H1 (cell line): ENCODE measurements at regions of chr5 and their contacts with region 1.

Region 1: GRCh38 chr5:157994906-157995519 is 136.1 kb upstream of the CLINT1 start:
- DNase-seq: peak; percentile 73 to 85
- H3K4me3 ChIP-seq: no peak overlapping the region
- H3K27ac ChIP-seq: no peak overlapping the region
- H3K4me1 ChIP-seq: peaks cover 0 to 2% (median 0%) of the 10 kb centered on the region in 4 experiments; a peak in 1 of 7 replicates
- H3K27me3 ChIP-seq: no peaks in the 10 kb centered on the region
- CTCF ChIP-seq: peak; percentile 83 to 91 (median 91)
- EP300 ChIP-seq: no peak
- POLR2A ChIP-seq: no peak
- RAD21 ChIP-seq: peak; percentile 95 to 97

Region 2: GRCh38 chr5:157820593-157821252 is 174.3 kb before region 1 on chr5:
- CTCF ChIA-PET with region 1: interaction called, 18 read pairs
- POLR2A ChIA-PET with region 1: no interaction called
- DNase-seq: no peak
- H3K4me3 ChIP-seq: no peak overlapping the region
- H3K27ac ChIP-seq: no peak overlapping the region
- H3K4me1 ChIP-seq: peaks cover 0 to 2% (median 0%) of the 10 kb centered on the region in 4 experiments; a peak in 2 of 7 replicates
- H3K27me3 ChIP-seq: no peaks in the 10 kb centered on the region
- CTCF ChIP-seq: peak in 2 of 3 experiments; percentile 7 to 35; a peak in 2 of 4 replicates
- EP300 ChIP-seq: no peak
- POLR2A ChIP-seq: no peak
- RAD21 ChIP-seq: peak; percentile 26 to 31; a peak in 3 of 4 replicates

Region 3: DNA sequence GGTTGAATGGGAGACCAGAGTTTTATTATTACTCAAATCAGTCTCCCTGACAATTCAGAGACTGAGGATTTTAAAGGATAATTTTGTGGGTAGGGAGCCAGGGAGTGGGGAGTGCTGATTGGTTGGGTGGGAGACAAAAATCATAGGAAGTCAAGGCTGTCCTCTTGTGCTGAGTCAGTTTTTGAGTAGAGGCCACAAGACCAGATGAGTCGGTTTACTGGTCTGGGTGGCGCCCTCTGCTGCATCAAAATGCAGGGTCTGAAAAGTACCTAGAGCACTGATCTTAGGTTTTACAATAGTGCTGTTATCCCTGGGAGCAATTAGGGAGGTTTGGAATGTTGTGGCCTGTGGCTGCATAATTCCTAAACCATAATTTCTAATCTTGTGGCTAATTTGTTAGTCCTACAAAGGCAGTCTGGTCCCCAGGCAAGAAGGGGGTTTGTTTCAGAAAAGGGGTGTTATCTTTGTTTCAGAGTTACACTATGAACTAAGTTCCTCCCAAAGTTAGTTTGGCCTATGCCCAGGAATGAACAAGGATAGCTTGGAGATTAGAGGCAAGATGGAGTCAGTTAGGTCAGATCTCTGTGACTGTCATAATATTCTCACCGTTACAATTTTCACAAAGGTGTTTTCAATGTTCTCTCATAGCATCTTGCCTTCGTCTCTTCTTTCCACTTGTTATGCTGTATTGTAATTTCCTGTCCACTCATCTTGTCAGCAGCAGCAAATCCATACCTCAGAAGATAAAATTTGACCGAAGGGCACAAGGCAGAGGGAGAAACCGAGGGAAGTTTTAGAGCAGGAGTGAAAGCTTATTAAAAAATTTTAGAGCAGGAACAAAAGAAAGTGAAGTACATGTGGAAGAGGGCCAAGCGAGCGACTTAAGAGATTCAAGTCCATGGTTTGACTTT is 76.9 kb before region 1 on chr5:
- CTCF ChIA-PET with region 1: interaction called, 19 read pairs
- POLR2A ChIA-PET with region 1: interaction called, 3 read pairs
- DNase-seq: peak; percentile 50 to 75
- H3K4me3 ChIP-seq: no peak overlapping the region
- H3K27ac ChIP-seq: no peak overlapping the region
- H3K4me1 ChIP-seq: peaks cover 0 to 10% (median 6%) of the 10 kb centered on the region in 4 experiments; a peak in 6 of 7 replicates
- H3K27me3 ChIP-seq: no peaks in the 10 kb centered on the region
- CTCF ChIP-seq: peak; percentile 57 to 83 (median 74)
- EP300 ChIP-seq: no peak
- POLR2A ChIP-seq: no peak
- RAD21 ChIP-seq: peak; percentile 73 to 80

Region 4: DNA sequence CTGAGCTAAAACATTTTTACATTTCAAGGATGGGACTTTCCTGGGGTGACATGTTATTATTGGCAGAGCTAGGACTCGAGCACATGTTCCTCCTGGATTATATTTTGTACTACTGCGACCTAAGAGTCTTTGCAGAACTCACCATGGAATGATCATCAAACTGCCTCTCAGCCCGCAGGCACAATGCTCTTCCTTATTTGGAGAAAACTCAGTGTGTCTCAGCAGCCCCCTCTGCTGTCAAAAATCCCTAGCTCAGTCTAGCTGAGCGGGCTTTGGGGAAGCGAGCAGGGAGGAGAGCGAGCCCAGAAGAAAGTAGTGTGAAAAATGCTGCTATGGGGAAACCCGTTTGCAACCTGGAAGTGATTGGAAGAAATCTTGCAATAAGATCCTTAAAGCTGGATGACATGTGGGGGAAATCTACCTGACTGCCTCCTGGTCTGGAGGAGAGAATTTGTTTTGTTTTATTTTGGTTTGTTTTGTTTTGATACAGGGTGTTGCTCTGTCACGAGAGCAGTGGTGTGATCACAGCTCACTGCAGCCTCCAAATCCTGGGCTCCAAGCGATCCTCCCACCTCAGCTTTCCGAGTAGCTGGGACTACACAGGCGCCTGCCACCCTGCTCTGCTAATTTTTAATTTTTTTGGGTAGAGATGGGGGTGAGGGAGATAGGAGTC is 46.1 kb before region 1 on chr5:
- CTCF ChIA-PET with region 1: interaction called, 16 read pairs
- POLR2A ChIA-PET with region 1: no interaction called
- DNase-seq: peak; percentile 85 to 93
- H3K4me3 ChIP-seq: no peak overlapping the region
- H3K27ac ChIP-seq: no peak overlapping the region; the same call in 1 of the 2 replicates
- H3K4me1 ChIP-seq: peaks cover 0 to 4% (median 1%) of the 10 kb centered on the region in 4 experiments; a peak in 4 of 7 replicates
- H3K27me3 ChIP-seq: no peaks in the 10 kb centered on the region
- CTCF ChIP-seq: peak; percentile 73 to 92 (median 78)
- EP300 ChIP-seq: peak in 1 of 2 experiments; percentile 90; a peak in 1 of 3 replicates
- POLR2A ChIP-seq: peak in 1 of 2 experiments; percentile 62; a peak in 2 of 3 replicates
- RAD21 ChIP-seq: peak; percentile 70 to 75

Region 5: DNA sequence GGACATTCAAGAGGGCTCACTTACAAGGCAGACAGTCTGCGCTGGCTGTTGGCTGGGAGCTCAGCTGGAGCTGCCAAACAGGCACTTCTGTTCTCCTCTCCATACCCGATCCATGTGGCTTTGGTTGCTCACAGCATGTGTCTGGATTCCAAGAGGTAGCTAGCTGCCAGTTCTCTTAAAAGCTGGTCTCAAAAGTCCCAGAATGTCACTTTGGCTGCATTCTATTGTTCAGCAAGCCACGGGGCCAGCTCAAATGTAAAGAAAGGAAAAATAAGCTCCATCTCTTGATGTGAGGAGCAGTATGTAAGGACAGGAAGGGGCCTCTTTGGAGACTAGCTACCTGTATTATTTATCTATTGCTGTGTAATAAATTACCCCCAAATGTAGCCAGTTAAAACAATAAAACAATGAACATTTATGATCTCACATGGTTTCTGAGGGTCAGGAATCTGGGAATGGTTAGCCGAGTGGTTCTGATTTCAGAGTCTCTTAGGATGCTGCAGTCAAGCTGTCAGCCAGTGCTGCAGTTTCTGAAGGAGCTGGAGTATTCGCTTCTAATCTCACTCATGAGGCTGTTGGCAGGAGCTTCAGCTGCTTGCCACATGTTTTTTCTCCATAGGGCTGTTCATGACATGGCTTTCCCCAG is 23.3 kb before region 1 on chr5:
- CTCF ChIA-PET with region 1: interaction called, 21 read pairs
- POLR2A ChIA-PET with region 1: no interaction called
- DNase-seq: peak in 1 of 2 experiments; percentile 56
- H3K4me3 ChIP-seq: no peak overlapping the region
- H3K27ac ChIP-seq: no peak overlapping the region
- H3K4me1 ChIP-seq: peaks cover 0 to 11% (median 3%) of the 10 kb centered on the region in 4 experiments; a peak in 4 of 7 replicates
- H3K27me3 ChIP-seq: no peaks in the 10 kb centered on the region
- CTCF ChIP-seq: no peak
- EP300 ChIP-seq: no peak
- POLR2A ChIP-seq: no peak
- RAD21 ChIP-seq: no peak; a peak in 1 of 4 replicates

Region 6: DNA sequence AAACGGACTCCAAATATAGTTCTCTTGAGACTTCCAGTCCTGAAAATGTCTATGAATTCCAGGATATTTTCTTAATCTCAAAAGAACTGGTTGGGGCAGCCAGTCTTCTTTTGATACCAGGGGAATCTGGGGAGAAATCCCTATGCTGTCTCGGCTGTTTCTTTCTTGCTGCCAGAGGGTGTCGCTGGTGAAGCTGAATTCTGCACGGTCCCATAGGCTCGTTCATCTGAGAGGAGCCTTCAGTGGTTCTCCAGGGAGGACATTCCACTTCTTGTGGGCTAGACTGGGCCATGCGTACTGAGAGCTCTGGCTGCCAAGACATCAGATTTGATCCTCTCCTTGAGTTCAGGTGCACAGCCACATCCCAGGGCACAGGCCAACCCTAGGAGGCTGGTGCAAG is 18.9 kb after region 1 on chr5:
- CTCF ChIA-PET with region 1: interaction called, 17 read pairs
- POLR2A ChIA-PET with region 1: no interaction called
- DNase-seq: peak in 1 of 2 experiments; percentile 55
- H3K4me3 ChIP-seq: no peak overlapping the region
- H3K27ac ChIP-seq: no peak overlapping the region
- H3K4me1 ChIP-seq: peaks cover 2 to 15% (median 10%) of the 10 kb centered on the region in 4 experiments; a peak in 6 of 7 replicates
- H3K27me3 ChIP-seq: no peaks in the 10 kb centered on the region
- CTCF ChIP-seq: peak; percentile 60 to 66 (median 63)
- EP300 ChIP-seq: no peak
- POLR2A ChIP-seq: no peak
- RAD21 ChIP-seq: peak; percentile 78 to 83